Mucosa of descending colon (tissue), 3 donors: ENCODE measurements at regions of chr5 and their contacts with region 1.

Region 1: GRCh38 chr5:55146543-55147151 is 13.3 kb upstream of the GPX8 start:
- DNase-seq: peak in 2 of 3 donors; percentile 79 to 90
- ATAC-seq: peak; percentile 95
- H3K4me3 ChIP-seq: no peak overlapping the region
- H3K4me1 ChIP-seq: no peaks in the 10 kb centered on the region
- CTCF ChIP-seq: peak; percentile 83

Region 2: DNA sequence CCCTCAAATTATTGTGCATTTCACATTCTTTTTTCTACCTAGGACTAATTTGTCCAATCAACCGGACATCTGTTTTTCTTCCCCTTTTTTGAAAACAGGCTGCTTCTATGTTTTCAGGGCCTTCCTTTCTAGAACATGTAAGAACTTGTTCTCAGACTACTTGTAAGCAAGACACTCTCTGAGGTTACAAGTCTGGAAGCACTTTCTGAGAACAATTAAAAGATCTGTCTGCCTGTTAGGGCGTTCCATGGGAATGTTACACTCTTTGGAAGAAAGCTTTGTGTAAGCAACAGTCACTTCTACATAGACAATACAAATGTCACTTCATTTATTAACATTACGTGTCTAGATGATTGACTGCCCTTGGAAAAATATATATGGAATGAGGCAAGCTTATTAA is 742.1 kb before region 1 on chr5:
- intact Hi-C with region 1: no loop called
- DNase-seq: no peak
- ATAC-seq: no peak
- H3K4me3 ChIP-seq: no peak overlapping the region
- H3K4me1 ChIP-seq: no peaks in the 10 kb centered on the region
- CTCF ChIP-seq: no peak

Region 3: GRCh38 chr5:54905943-54906537 is 240.6 kb before region 1 on chr5:
- intact Hi-C with region 1: loop called (anchors 10 kb)
- DNase-seq: peak in 2 of 3 donors; percentile 48 to 83
- ATAC-seq: no peak
- H3K4me3 ChIP-seq: no peak overlapping the region
- H3K4me1 ChIP-seq: no peaks in the 10 kb centered on the region
- CTCF ChIP-seq: no peak

Region 4: DNA sequence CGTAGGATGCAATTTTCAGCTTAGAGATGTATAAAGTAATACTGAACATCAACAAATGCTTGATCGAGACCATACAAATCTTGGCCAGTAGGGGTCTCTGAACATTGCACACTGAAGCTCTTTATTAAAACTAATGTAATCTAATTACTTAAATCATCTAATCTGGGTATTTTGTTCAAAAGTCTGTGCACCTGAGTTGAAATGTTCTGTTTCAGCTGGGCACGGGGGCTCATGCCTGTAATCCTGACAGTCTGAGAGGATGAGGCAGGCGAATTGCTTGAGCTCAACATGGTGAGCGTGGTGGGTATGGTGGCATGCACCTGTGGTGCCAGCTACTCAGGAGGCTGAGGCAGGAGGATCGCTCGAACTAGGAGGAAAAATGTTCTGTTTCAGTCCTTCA is 202.3 kb before region 1 on chr5:
- intact Hi-C with region 1: loop called in 1 of 2 experiments (anchors 10 kb)
- DNase-seq: peak in 1 of 3 donors; percentile 46
- ATAC-seq: no peak
- H3K4me3 ChIP-seq: no peak overlapping the region
- H3K4me1 ChIP-seq: no peaks in the 10 kb centered on the region
- CTCF ChIP-seq: no peak